ENCODE measurements at regions of chr13 and their contacts with region 1.

Region 1: GRCh38 chr13:41061075-41061913 is at the start of gene WBP4:
- DNase-seq: peak; percentile 72 to 93 (median 82)
- ATAC-seq: peak; percentile 52
- H3K4me3 ChIP-seq: peak within 1 kb of the TSS; percentile 74
- H3K4me3 Mint-ChIP-seq: peak within 1 kb of the TSS; percentile 95
- H3K27ac ChIP-seq: peak within 1 kb of the TSS; percentile 82 to 86
- H3K27ac Mint-ChIP-seq: peak within 1 kb of the TSS; percentile 98
- H3K4me1 ChIP-seq: peaks cover 13% of the 10 kb centered on the region
- H3K4me1 Mint-ChIP-seq: peaks cover 61% of the 10 kb centered on the region
- H3K27me3 ChIP-seq: no peaks in the 10 kb centered on the region
- H3K27me3 Mint-ChIP-seq: peaks cover 14% of the 10 kb centered on the region
- CTCF ChIP-seq: no peak
- total RNA-seq, gene WBP4: 6.9 to 7.4 TPM

Region 2: DNA sequence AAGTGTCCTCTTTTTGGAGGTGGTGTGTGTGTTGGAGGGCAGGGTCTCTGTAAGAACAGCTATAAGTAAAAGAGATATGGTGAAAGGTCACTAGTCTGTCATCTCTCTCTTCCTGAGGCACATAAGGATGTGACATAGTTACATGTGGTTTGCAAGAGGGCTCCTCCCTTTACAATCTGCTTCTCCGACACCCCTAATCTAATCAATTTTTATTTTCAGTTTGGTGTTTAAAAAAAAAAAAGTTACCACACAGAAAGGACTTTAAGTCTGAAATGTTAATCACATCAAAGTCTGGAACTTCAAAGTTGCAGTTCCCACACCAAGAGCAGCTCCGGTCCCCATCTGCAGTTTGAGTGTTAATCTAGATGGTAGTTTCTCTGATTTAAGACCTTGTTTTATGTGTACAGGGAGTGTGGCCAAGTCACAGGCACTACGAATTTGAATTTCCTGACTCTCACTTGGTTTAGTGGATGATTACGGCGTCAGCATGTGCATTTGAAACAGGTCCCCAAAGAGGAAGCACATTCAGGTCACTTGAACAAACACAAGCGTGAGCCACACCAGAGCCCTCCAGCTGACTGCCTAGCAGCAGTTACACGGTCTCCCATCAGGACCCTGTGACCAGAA is 448.0 kb before region 1 on chr13:
- CTCF ChIA-PET with region 1: no interaction called
- POLR2A ChIA-PET with region 1: no interaction called
- intact Hi-C with region 1: no loop called
- DNase-seq: peak; percentile 27 to 89 (median 42)
- ATAC-seq: peak; percentile 81
- H3K4me3 ChIP-seq: peak overlapping the region; percentile 42
- H3K4me3 Mint-ChIP-seq: peak overlapping the region; percentile 73
- H3K27ac ChIP-seq: peak overlapping the region; percentile 70 to 85
- H3K27ac Mint-ChIP-seq: peak overlapping the region; percentile 87
- H3K4me1 ChIP-seq: peaks cover 73% of the 10 kb centered on the region
- H3K4me1 Mint-ChIP-seq: peaks cover 98% of the 10 kb centered on the region
- H3K27me3 ChIP-seq: no peaks in the 10 kb centered on the region
- H3K27me3 Mint-ChIP-seq: no peaks in the 10 kb centered on the region
- CTCF ChIP-seq: no peak

Region 3: DNA sequence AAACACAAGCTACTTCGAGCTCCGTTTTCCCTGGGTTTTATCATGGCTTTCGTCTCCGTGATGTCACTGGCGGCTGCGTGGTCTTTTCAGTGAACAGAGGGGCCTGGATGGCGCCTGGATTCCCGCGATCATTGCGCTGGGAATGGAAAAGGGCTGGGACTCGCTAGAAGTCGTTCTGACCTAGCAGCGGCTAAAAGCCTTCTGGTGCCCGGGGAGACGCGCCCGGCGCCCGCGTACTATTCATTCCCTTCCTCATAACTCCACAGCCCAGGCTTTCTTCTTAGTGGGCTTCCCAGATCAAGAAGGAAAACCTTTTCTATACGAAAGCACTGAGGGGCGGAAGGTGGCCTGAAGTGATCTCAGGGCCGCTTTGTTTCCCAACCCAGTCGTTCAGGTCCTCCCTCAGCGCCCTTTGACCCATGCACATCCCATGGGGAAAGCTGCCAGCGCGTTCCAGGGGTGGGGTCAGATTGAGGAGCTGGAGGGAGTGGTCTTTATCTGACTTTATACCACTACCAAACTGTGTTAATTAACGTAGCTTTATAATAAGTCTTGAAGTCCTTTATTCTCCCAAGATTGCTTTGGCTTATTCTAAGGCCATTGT is 138.8 kb before region 1 on chr13:
- CTCF ChIA-PET with region 1: interaction called, 3 read pairs
- POLR2A ChIA-PET with region 1: interaction called, 34 read pairs
- intact Hi-C with region 1: loop called in 1 of 2 experiments (anchors 5 kb)
- DNase-seq: peak in 2 of 14 experiments; percentile 9 to 37
- ATAC-seq: no peak
- H3K4me3 ChIP-seq: no peak overlapping the region
- H3K4me3 Mint-ChIP-seq: peak overlapping the region; percentile 80
- H3K27ac ChIP-seq: no peak overlapping the region
- H3K27ac Mint-ChIP-seq: peak overlapping the region; percentile 42
- H3K4me1 ChIP-seq: peaks cover 15% of the 10 kb centered on the region
- H3K4me1 Mint-ChIP-seq: peaks cover 25% of the 10 kb centered on the region
- H3K27me3 ChIP-seq: no peaks in the 10 kb centered on the region
- H3K27me3 Mint-ChIP-seq: no peaks in the 10 kb centered on the region
- CTCF ChIP-seq: no peak

Region 4: DNA sequence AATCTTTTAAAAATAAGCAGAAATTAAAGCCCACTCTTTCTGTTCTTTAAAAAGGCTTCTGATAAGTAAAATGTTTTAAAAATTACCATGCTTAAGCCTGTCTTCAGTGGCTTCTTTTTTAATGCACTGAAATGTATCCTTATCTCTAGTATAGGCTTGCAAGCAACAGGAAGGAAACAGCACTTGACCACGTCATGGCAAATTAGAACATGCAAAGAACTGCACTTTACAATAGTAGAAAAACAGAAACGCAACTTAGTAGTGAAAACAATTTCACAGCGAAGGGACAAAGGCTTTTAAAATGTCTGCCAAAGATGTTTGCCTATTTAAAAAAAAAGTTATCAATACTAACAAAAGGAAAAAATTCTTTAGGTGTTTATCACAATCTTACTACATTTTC is 78.5 kb before region 1 on chr13:
- CTCF ChIA-PET with region 1: interaction called, 3 read pairs
- POLR2A ChIA-PET with region 1: interaction called, 14 read pairs
- intact Hi-C with region 1: no loop called
- DNase-seq: peak in 9 of 14 experiments; percentile 24 to 94 (median 52)
- ATAC-seq: peak; percentile 65
- H3K4me3 ChIP-seq: peak overlapping the region; percentile 71
- H3K4me3 Mint-ChIP-seq: peak overlapping the region; percentile 96
- H3K27ac ChIP-seq: peak overlapping the region; percentile 87 to 91
- H3K27ac Mint-ChIP-seq: peak overlapping the region; percentile 92
- H3K4me1 ChIP-seq: peaks cover 26% of the 10 kb centered on the region
- H3K4me1 Mint-ChIP-seq: peaks cover 59% of the 10 kb centered on the region
- H3K27me3 ChIP-seq: no peaks in the 10 kb centered on the region
- H3K27me3 Mint-ChIP-seq: no peaks in the 10 kb centered on the region
- CTCF ChIP-seq: no peak

Region 5: DNA sequence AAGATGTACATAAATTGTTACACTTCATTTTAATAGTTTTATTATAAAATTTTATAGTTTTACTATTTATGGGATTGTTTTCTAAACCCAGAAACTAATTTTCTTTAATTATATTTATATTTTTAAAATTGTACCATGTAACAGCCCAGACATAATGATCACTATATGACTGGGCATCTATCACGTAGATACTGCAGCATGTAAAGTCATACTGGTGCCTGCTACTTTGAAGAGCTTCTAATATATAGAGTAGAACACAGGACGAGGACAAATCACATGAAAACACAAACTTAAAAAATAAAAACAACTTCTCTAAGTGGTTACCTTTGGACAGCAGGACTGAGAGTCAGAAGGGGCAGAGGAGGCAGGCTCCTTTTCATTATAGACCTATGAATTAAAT is 47.5 kb before region 1 on chr13:
- CTCF ChIA-PET with region 1: interaction called, 11 read pairs
- POLR2A ChIA-PET with region 1: interaction called, 103 read pairs
- intact Hi-C with region 1: loop called in 1 of 2 experiments (anchors 2 kb)
- DNase-seq: no peak
- ATAC-seq: no peak
- H3K4me3 ChIP-seq: peak overlapping the region; percentile 52
- H3K4me3 Mint-ChIP-seq: peak overlapping the region; percentile 92
- H3K27ac ChIP-seq: peak overlapping the region in 1 of 2 donors; percentile 10
- H3K27ac Mint-ChIP-seq: peak overlapping the region; percentile 94
- H3K4me1 ChIP-seq: peaks cover 21% of the 10 kb centered on the region
- H3K4me1 Mint-ChIP-seq: peaks cover 69% of the 10 kb centered on the region
- H3K27me3 ChIP-seq: no peaks in the 10 kb centered on the region
- H3K27me3 Mint-ChIP-seq: no peaks in the 10 kb centered on the region
- CTCF ChIP-seq: no peak

Region 6: GRCh38 chr13:41132512-41133152 is 71.3 kb after region 1 on chr13 and contains the start of gene KBTBD6:
- CTCF ChIA-PET with region 1: no interaction called
- POLR2A ChIA-PET with region 1: interaction called, 4 read pairs
- intact Hi-C with region 1: loop called (anchors 2 kb)
- DNase-seq: peak; percentile 81 to 96 (median 88)
- ATAC-seq: peak; percentile 96
- H3K4me3 ChIP-seq: peak within 1 kb of the TSS; percentile 91
- H3K4me3 Mint-ChIP-seq: peak within 1 kb of the TSS; percentile 96
- H3K27ac ChIP-seq: peak within 1 kb of the TSS; percentile 50 to 68
- H3K27ac Mint-ChIP-seq: peak within 1 kb of the TSS; percentile 86
- H3K4me1 ChIP-seq: peaks cover 37% of the 10 kb centered on the region
- H3K4me1 Mint-ChIP-seq: peaks cover 54% of the 10 kb centered on the region
- H3K27me3 ChIP-seq: no peaks in the 10 kb centered on the region
- H3K27me3 Mint-ChIP-seq: no peaks in the 10 kb centered on the region
- CTCF ChIP-seq: no peak
- total RNA-seq, gene KBTBD6: 6.8 to 7.2 TPM

Region 7: DNA sequence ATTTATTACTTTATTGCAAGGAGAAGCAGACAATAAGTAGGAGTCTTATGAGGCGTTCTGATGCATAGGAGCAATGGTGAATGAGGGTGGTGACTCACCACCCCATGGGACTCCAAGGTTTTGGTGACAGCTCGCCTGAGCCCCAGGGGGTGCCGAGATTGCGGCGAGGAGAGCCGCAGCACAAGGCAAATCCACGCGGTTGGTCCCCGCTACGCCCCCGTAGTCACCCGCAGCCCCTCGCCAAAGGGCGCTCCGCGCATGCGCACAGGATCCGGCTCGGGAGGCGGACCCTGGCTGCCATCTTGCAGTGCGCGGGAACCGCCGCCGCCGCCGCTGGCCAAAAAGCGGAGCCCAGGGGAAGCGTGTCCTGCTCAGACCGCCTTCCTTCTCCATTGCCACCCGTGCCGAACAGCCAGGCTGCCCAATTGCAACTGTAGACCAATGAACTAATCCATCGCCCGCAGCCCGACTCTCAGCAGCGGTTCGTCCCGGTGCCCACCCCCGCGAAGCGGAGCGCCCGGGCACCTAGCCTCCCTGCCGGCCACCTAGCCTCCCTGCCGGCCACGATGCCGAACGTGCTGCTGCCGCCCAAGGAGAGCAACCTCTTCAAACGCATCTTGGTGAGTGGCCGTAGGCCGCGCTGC is 249.8 kb after region 1 on chr13 and contains the start of gene NAA16:
- CTCF ChIA-PET with region 1: no interaction called
- POLR2A ChIA-PET with region 1: interaction called, 4 read pairs
- intact Hi-C with region 1: loop called in 1 of 2 experiments (anchors 10 kb)
- DNase-seq: peak; percentile 89 to 97 (median 94)
- ATAC-seq: peak; percentile 85
- H3K4me3 ChIP-seq: peak within 1 kb of the TSS; percentile 90
- H3K4me3 Mint-ChIP-seq: peak within 1 kb of the TSS; percentile 97
- H3K27ac ChIP-seq: peak within 1 kb of the TSS; percentile 55 to 85
- H3K27ac Mint-ChIP-seq: peak within 1 kb of the TSS; percentile 98
- H3K4me1 ChIP-seq: peaks cover 35% of the 10 kb centered on the region
- H3K4me1 Mint-ChIP-seq: peaks cover 56% of the 10 kb centered on the region
- H3K27me3 ChIP-seq: no peaks in the 10 kb centered on the region
- H3K27me3 Mint-ChIP-seq: no peaks in the 10 kb centered on the region
- CTCF ChIP-seq: no peak
- total RNA-seq, gene NAA16: 76.9 to 80.5 TPM

Region 8: DNA sequence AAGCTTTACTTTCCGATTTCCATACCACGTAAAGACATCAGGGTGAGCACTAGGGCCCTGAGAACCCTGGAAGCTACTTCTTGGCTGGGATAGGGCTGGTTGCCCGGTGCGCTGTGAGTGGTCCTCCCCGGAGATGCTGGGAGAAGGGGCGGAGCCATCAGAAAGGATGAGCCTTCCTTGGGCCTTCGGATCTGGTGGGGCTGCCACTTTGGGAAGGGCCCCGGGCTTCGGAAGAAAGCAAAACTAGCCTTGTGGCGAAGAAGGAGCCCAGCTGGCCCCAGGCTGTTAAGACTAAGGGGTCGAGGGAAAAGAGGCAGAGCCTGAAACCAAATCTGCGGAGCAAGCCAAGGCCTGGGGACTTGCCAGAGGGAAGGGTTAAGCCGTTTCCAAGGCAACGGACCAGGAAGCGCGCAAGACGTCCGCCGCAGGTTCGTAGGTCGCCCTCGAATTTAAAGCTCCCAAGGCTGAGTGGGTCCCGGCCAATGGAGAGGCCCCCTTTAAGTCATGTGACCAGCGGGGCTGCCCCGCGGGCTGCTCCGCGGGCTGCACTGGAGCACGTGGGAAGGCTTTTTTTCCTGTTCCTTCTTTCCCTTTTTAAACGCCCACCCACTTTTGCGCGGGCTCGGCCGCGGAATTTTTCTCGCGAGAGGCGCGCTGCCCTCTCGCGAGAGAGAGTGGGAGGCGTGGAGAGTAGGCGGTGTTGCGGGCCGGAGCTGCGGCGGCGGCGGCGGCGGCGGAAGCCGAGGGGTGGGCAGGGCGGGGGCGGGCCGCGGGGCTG is 1210.2 kb after region 1 on chr13:
- CTCF ChIA-PET with region 1: no interaction called
- POLR2A ChIA-PET with region 1: interaction called, 5 read pairs
- intact Hi-C with region 1: loop called in 1 of 2 experiments (anchors 5 kb)
- DNase-seq: peak; percentile 82 to 99 (median 90)
- ATAC-seq: peak; percentile 84
- H3K4me3 ChIP-seq: peak overlapping the region; percentile 87
- H3K4me3 Mint-ChIP-seq: peak overlapping the region; percentile 99
- H3K27ac ChIP-seq: peak overlapping the region; percentile 91 to 96
- H3K27ac Mint-ChIP-seq: no peak overlapping the region
- H3K4me1 ChIP-seq: peaks cover 39% of the 10 kb centered on the region
- H3K4me1 Mint-ChIP-seq: peaks cover 53% of the 10 kb centered on the region
- H3K27me3 ChIP-seq: no peaks in the 10 kb centered on the region
- H3K27me3 Mint-ChIP-seq: no peaks in the 10 kb centered on the region
- CTCF ChIP-seq: no peak